Dendritic cell treated with granulocyte-macrophage colony-stimulating factor and Interleukin-4, amounts not matched to agents 40 ng/mL and 50 ng/mL, for 4 days (primary cell): ENCODE measurements at regions of chr7 and their contacts with region 1.

Region 1: DNA sequence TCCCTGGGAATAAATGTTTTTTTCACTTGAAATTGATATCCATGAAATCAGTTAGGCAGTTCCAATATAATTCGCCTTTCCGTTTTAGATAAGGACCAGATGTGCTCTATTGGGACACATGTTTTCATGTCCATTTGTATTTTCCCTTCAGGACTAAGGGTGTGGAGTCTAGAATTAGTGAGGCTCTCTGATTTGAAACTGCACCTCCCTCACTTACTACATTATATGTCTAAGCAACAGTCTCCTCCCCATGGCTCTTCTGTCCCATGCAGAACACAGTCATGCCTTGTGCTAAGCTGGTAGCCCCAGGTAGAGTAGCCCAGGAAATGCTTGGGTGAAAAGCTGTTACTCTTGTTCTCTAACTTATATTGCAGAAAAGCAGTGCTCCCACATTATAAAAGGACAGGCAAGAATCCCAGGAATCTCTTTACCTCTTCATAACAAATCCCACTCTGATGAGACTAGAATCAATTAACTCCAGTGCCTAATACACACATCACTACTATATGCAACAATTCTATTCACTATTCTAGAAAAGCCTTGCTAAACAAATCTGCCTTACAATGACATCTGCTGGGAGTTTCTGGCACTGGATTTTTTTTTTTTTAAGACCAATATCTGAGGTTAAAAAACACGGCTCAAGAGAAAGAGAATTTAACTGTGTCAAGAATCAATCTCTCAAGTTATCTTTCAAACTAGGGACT is 293.9 kb downstream of the SNX13 start:
- H3K4me3 Mint-ChIP-seq: no peak overlapping the region
- H3K27ac Mint-ChIP-seq: no peak overlapping the region
- H3K4me1 Mint-ChIP-seq: no peaks in the 10 kb centered on the region
- H3K27me3 Mint-ChIP-seq: peaks cover 3% of the 10 kb centered on the region

Region 2: DNA sequence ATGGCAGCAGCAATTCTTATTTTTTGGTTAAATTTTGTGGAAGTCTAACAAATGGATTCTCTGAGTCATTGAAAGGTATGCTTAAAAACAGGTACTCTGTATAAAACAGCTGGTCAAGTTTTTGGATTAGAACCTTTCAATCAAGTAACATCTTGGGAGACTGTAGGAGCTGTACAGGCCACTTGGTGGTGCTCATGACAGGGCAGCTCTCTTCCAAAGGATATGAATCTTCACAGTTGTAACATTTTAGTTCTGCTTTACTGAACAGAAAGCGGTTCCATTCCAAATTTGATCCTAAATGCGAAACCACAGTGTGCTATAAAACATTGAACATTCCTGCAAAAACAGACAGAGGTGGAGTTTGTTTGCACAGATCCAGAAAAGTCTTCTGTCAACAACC is 720.1 kb before region 1 on chr7:
- intact Hi-C with region 1: loop called (anchors 5 kb)
- H3K4me3 Mint-ChIP-seq: no peak overlapping the region
- H3K27ac Mint-ChIP-seq: no peak overlapping the region
- H3K4me1 Mint-ChIP-seq: peaks cover 30% of the 10 kb centered on the region
- H3K27me3 Mint-ChIP-seq: peaks cover 3% of the 10 kb centered on the region

Region 3: DNA sequence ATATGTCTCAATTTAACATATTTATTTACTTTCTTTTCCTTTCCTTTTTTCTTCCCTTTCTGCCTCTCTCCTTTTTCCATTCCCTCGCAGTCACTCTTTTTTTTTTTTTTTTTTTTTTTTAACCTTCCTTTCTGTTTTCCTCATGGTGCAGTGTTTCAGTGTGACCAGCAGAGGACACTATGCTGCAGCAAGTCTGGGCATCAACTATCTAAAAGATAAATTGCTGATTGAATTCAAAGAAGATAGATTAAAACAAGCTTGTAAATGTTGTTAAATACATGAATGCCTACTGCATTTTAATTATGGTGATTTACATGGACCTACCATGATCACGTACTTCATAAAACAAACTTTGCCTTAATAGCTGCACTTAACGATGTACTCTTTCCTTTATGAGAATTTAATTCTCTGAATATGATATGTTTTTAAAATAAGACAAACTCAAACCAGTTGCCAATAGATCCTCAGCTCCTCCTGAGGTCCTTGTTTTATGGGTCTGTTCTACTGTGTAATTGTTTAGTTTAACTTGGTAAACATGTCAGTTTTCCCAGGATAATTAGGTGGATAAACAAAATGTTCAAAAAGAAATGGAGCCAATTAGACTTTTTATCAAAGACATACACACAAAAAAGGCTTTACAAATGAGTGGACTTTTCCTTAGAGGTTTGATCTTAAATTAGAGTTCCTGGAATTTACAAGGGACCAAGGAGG is 663.6 kb before region 1 on chr7:
- intact Hi-C with region 1: loop called (anchors 5 kb)
- H3K4me3 Mint-ChIP-seq: peak overlapping the region; percentile 24
- H3K27ac Mint-ChIP-seq: peak overlapping the region; percentile 56
- H3K4me1 Mint-ChIP-seq: peaks cover 23% of the 10 kb centered on the region
- H3K27me3 Mint-ChIP-seq: peaks cover 3% of the 10 kb centered on the region